ENCODE measurements at regions of chr12 and their contacts with region 1.

Region 1: DNA sequence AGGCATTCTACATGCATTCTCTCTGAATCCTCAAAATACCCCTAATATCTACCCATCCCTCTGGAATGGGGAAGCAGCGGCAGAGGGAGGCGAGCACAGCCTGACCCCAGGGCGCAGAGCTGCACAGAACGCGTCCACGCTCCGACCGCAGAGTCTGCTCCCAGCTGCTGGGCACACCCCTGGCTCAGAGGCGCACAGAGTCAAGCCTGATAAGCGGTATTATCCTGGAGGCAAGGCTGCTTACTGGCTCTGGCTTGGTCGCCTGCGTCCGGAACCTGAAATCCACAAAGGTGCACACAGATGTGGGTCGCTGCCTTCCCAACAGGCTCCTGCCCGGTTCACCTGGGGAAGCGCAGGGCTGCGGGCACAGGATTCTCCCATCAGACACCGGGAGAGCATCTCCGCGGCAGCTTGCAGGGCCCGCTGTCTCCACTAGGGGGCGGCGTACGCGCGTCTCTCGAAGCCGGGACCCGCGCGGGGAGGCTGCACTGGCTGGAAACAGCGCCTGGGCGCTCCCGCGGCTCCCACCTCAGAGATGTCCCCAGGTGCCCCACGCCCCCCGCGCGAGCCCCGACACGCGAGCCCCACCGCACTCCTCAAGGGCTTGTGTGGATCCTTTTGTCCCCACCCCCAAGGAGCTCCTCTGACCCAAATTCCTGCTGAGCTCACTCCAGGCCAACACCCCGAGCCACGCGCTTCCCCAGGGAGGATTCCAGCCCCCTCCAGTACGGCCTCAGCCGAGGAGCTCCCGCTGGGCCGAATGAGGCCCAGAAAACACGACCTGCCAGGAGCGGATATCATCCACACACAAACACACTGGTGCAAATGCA is 120.1 kb upstream of the FZD10 start:
- DNase-seq: peak; percentile 77
- H3K4me3 Mint-ChIP-seq: no peak overlapping the region
- H3K27ac Mint-ChIP-seq: no peak overlapping the region
- H3K4me1 Mint-ChIP-seq: no peaks in the 10 kb centered on the region
- H3K27me3 Mint-ChIP-seq: peaks cover 65% of the 10 kb centered on the region

Region 2: GRCh38 chr12:129211862-129212630 is 830.2 kb before region 1 on chr12:
- CTCF ChIA-PET with region 1: no interaction called
- intact Hi-C with region 1: no loop called
- DNase-seq: no peak
- H3K4me3 Mint-ChIP-seq: no peak overlapping the region
- H3K27ac Mint-ChIP-seq: no peak overlapping the region
- H3K4me1 Mint-ChIP-seq: no peaks in the 10 kb centered on the region
- H3K27me3 Mint-ChIP-seq: no peaks in the 10 kb centered on the region

Region 3: DNA sequence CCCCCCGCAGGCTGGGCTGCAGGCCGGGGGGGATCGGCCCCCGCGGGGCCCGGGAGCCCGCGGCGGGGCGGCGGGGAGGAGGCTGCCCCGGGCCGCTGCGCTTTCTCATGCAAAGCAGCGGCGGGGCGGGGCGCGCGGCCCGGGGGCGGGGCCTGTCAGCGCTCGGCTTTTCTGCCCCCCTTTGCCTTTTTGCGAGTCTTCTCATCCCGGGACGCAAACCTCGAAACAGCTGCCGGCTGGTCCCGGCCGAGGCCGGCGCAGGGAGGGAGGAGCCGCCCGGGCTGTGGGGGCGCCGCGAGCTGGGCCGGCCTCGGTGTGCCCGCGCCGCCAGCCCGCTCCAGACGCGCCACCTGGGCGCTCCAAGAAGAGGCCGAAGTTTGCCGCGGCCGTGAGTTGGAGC is 120.1 kb after region 1 on chr12 and contains the start of gene FZD10:
- CTCF ChIA-PET with region 1: no interaction called
- intact Hi-C with region 1: loop called (anchors 10 kb)
- DNase-seq: peak; percentile 31
- H3K4me3 Mint-ChIP-seq: peak within 1 kb of the TSS; percentile 55
- H3K27ac Mint-ChIP-seq: no peak within 1 kb of the TSS
- H3K4me1 Mint-ChIP-seq: peaks cover 13% of the 10 kb centered on the region
- H3K27me3 Mint-ChIP-seq: peaks cover 46% of the 10 kb centered on the region
- total RNA-seq, gene FZD10: not detected

Region 4: GRCh38 chr12:130747867-130748740 is 705.9 kb after region 1 on chr12:
- CTCF ChIA-PET with region 1: no interaction called
- intact Hi-C with region 1: loop called (anchors 1 kb)
- DNase-seq: peak; percentile 87
- H3K4me3 Mint-ChIP-seq: no peak overlapping the region
- H3K27ac Mint-ChIP-seq: no peak overlapping the region
- H3K4me1 Mint-ChIP-seq: peaks cover 6% of the 10 kb centered on the region
- H3K27me3 Mint-ChIP-seq: peaks cover 7% of the 10 kb centered on the region